Activated naive CD8-positive, alpha-beta T cell treated with anti-CD3 and anti-CD28 coated beads, Interleukin-2, amount 10 ng/mL, durations not matched to agents 7 days and 5 days (primary cell): ENCODE measurements at regions of chr6 and their contacts with region 1.

Region 1: GRCh38 chr6:31739639-31740396 is at the start of gene MSH5:
- DNase-seq: peak; percentile 96
- ATAC-seq: peak; percentile 82
- H3K4me3 Mint-ChIP-seq: peak within 1 kb of the TSS; percentile 98
- H3K27ac Mint-ChIP-seq: peak within 1 kb of the TSS; percentile 93
- H3K4me1 Mint-ChIP-seq: peaks cover 50% of the 10 kb centered on the region
- H3K27me3 Mint-ChIP-seq: no peaks in the 10 kb centered on the region
- total RNA-seq, gene MSH5: 59.2 to 68.2 TPM

Region 2: DNA sequence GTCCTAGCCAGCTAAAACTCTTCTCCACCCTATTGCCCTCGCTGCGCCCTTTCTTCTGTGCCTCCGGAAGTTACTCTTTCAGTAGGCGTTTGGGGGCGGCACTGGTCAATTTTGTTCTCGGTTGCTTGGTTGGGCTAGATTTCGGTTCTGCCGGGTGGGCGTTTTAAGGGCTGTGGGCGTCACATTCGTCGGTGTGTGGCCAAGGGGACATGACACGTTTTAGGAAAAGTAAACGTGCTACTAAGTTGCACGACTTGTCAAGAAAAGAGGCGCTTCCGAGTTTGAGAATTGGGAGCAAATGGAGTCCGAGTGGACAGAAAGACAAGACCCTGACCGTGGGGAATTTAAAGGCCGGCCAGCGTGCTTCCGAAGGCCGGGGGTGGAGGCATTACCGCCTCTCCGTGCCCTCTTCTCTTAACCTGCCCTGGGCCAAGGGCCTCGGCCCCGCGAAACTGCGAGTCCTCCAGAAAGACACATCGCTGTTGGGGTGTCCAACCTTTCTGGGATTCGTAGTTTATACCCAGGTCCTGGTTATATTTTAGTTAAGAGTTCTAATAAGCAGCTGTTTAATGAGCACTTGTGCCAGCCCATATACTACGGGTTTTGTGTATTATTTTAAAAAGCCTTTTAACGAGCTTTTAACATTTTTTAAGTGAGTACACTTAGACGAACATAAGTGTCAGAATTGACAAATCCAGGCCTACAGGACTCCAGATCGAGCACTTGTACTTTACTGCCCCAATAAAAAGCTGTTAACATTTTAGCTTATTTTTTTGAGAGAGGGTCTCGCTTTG is 86.7 kb before region 1 on chr6:
- POLR2A ChIA-PET with region 1: interaction called, 25 read pairs
- DNase-seq: no peak
- ATAC-seq: peak; percentile 66
- H3K4me3 Mint-ChIP-seq: peak overlapping the region; percentile 94
- H3K27ac Mint-ChIP-seq: peak overlapping the region; percentile 99
- H3K4me1 Mint-ChIP-seq: peaks cover 46% of the 10 kb centered on the region
- H3K27me3 Mint-ChIP-seq: no peaks in the 10 kb centered on the region

Region 3: DNA sequence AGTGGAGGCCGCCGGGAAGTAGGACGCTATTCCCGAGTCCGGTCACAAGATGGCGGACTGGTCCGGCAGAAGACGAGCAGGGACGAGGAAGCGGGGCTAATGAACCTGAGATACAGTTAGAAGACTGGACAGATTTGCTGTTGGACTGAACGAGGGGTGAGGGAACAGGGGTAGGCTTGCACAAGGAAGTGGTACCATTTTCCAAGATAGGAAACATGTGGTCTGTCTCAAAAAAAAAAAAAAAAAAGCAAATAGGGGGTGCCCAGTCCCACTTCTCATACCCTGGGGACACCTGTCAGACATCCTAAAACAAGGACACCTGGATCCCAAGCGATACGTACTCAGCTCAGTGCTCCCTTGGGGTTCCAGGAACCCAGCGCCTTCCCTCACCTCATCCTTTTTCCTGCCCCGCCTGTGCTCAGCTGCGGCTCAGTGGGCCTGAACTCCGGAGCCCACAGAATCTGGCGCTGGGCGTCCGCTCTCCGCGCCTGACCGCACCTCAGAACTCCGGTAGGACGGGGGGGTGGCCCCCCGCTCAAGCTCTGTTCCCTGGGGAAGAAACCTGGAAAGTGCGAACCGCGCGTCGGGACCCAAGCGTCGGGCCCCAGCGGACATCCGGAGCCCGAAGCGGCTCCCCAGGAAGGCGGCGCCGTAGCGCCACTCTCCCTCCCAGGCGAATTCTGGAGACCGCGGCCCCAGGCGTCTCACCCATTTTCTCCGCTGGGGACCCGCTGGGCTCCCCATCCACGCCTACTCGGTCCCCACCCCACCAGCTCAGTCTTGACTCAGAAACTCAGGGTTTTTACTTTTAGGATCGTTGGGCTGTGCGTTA is 58.8 kb before region 1 on chr6 and contains the start of gene LY6G5C:
- POLR2A ChIA-PET with region 1: interaction called, 16 read pairs
- DNase-seq: peak; percentile 64
- ATAC-seq: peak; percentile 57
- H3K4me3 Mint-ChIP-seq: peak within 1 kb of the TSS; percentile 79
- H3K27ac Mint-ChIP-seq: peak within 1 kb of the TSS; percentile 77
- H3K4me1 Mint-ChIP-seq: peaks cover 28% of the 10 kb centered on the region
- H3K27me3 Mint-ChIP-seq: no peaks in the 10 kb centered on the region
- total RNA-seq, gene LY6G5C: 3.5 to 4.6 TPM

Region 4: GRCh38 chr6:31752739-31753319 is 13.0 kb after region 1 on chr6:
- POLR2A ChIA-PET with region 1: interaction called, 13 read pairs
- DNase-seq: no peak
- ATAC-seq: no peak
- H3K4me3 Mint-ChIP-seq: no peak overlapping the region
- H3K27ac Mint-ChIP-seq: no peak overlapping the region
- H3K4me1 Mint-ChIP-seq: no peaks in the 10 kb centered on the region
- H3K27me3 Mint-ChIP-seq: no peaks in the 10 kb centered on the region

Region 5: DNA sequence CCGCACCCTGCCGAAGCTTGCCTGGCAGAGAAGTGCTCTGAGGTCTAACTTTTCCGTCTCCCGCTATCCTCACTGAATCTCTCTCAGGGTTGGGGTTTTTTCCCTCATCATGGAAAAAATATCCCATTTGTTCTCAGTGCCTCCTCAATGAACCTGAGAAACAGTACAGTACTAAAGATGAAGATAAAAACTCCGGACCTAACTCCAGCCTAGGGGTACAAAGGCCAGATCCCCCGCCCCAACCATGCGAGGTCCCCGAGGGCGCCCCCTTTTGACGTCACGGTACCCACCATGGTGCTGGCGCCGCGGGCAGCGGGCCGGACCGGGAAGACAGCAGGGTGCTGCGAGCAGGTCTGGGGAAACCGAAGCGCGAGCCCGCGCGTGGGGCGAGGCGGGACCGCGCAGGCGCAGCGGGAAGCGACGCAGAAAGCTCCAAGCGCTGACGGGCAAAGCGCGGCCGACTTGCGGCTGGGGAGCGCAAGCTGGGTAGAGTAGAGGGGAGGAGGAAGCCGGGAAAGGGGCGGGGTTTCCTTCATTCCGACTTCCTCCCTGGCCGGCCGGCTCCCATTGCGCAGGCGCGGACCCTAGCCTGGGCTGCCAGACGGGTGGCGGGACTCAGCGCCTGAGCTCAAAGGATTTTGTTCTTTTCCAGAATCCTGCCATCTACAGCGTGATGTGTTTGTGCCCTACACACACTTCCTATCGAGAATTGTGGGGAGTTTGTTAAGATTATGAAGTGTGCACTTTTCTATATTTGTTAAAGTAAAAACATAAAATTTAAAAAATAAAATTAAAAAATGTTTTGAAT is 66.9 kb after region 1 on chr6 and contains the start of gene LSM2:
- POLR2A ChIA-PET with region 1: interaction called, 11 read pairs
- DNase-seq: peak; percentile 98
- ATAC-seq: peak; percentile 96
- H3K4me3 Mint-ChIP-seq: peak within 1 kb of the TSS; percentile 99
- H3K27ac Mint-ChIP-seq: peak within 1 kb of the TSS; percentile 94
- H3K4me1 Mint-ChIP-seq: peaks cover 20% of the 10 kb centered on the region
- H3K27me3 Mint-ChIP-seq: no peaks in the 10 kb centered on the region
- total RNA-seq, gene LSM2: 89.9 to 97.9 TPM

Region 6: GRCh38 chr6:31827286-31828079 is 87.7 kb after region 1 on chr6 and contains the start of gene HSPA1B:
- POLR2A ChIA-PET with region 1: interaction called, 29 read pairs
- DNase-seq: peak; percentile 89
- ATAC-seq: peak; percentile 82
- H3K4me3 Mint-ChIP-seq: peak within 1 kb of the TSS; percentile 92
- H3K27ac Mint-ChIP-seq: peak within 1 kb of the TSS; percentile 97
- H3K4me1 Mint-ChIP-seq: peaks cover 32% of the 10 kb centered on the region
- H3K27me3 Mint-ChIP-seq: no peaks in the 10 kb centered on the region
- total RNA-seq, gene HSPA1B: 49.0 to 55.7 TPM

Region 7: DNA sequence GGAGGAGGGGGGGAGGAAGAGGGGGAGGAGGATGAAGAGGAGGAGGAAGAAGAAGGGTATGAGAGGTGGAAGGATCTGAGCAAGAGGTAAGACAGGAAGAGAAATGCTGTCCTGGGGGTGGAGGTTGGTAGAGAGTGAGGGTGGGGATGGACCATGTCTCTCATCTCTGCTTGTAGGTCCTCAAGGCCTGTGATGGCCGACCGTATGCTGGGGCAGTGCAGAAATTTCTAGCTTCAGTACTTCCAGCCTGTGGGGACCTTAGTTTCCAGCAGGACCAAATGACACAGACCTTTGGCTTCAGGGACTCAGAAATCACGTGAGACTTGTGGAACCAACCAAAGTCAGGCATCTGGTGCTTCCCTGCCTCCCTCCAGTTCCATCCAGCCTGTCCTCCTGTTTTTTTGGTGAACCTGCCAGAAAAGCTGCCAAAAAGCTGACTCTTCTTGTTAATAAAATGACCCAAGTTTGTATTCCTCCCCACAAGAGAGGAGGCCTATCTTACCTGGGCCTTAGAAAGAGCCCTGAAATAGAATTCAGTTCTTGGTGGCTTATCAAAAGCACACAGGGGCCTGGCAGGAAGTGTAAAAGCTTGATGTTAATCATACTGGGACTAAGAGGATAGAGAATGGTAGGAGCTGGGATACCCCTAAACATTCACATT is 239.6 kb after region 1 on chr6:
- POLR2A ChIA-PET with region 1: no interaction called
- DNase-seq: no peak
- ATAC-seq: no peak
- H3K4me3 Mint-ChIP-seq: peak overlapping the region; percentile 32
- H3K27ac Mint-ChIP-seq: peak overlapping the region; percentile 82
- H3K4me1 Mint-ChIP-seq: peaks cover 5% of the 10 kb centered on the region
- H3K27me3 Mint-ChIP-seq: no peaks in the 10 kb centered on the region